ENCODE measurements at regions of chr6 and their contacts with region 1.

Region 1: GRCh38 chr6:109455502-109456282 is at the start of gene MICAL1:
- H3K4me3 ChIP-seq: peak within 1 kb of the TSS; percentile 78
- H3K27ac ChIP-seq: peak within 1 kb of the TSS; percentile 39; the same call in 1 of the 2 replicates
- H3K4me1 ChIP-seq: no peaks in the 10 kb centered on the region
- CTCF ChIP-seq: peak; percentile 97

Region 2: DNA sequence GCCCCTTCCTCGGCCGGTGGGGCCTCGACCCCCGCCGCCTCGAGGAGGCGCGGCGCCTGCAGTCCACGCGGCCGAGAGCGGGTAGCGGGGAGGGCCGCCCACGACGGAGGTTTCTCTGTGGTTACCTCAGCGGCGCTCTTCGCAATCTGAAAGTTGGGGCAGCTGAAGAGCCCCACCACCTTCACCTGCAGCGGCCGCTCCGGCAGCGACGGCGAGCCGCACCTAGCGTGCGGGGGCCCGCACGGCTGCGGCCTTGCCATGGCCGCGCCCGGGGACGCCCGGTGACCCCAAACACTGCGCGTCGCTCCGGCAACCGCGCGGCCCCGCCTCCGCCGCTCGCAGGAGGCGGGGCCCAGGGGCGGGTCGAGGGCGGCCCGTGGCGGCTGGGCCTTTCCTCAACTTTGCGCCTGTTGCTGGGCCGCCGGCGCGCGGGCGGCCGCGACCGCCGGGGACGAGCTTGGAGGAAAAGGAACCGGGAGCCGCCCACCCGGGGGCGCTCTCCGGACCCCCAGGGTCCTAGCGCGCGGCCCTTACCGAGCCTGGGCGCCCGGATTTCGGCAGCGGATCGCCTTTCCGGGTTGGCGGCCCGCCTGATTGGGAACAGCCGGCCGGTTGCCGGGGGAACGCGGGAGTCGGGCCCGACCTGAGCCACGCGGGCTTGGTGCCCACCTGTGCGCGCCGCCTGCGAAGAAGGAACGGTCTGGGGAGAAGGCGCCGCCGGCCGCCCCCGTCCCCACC is 15.2 kb before region 1 on chr6 and contains the starts of genes PPIL6 and SMPD2:
- CTCF ChIA-PET with region 1: interaction called, 21 read pairs
- POLR2A ChIA-PET with region 1: interaction called, 39 read pairs
- H3K4me3 ChIP-seq: peak within 1 kb of the TSS; percentile 82
- H3K27ac ChIP-seq: peak within 1 kb of the TSS; percentile 68; the same call in 1 of the 2 replicates
- H3K4me1 ChIP-seq: no peaks in the 10 kb centered on the region
- CTCF ChIP-seq: peak; percentile 59; the same call in 1 of the 2 replicates

Region 3: GRCh38 chr6:109465772-109466171 is 10.1 kb after region 1 on chr6:
- CTCF ChIA-PET with region 1: no interaction called
- POLR2A ChIA-PET with region 1: no interaction called
- H3K4me3 ChIP-seq: no peak overlapping the region
- H3K27ac ChIP-seq: no peak overlapping the region
- H3K4me1 ChIP-seq: no peaks in the 10 kb centered on the region
- CTCF ChIP-seq: no peak

Region 4: GRCh38 chr6:109799616-109800015 is 343.9 kb after region 1 on chr6:
- CTCF ChIA-PET with region 1: no interaction called
- POLR2A ChIA-PET with region 1: no interaction called
- H3K4me3 ChIP-seq: no peak overlapping the region
- H3K27ac ChIP-seq: no peak overlapping the region
- H3K4me1 ChIP-seq: peaks cover 3% of the 10 kb centered on the region; the same call in 1 of the 2 replicates
- CTCF ChIP-seq: no peak